ENCODE measurements at regions of chr19 and their contacts with region 1.

Region 1: DNA sequence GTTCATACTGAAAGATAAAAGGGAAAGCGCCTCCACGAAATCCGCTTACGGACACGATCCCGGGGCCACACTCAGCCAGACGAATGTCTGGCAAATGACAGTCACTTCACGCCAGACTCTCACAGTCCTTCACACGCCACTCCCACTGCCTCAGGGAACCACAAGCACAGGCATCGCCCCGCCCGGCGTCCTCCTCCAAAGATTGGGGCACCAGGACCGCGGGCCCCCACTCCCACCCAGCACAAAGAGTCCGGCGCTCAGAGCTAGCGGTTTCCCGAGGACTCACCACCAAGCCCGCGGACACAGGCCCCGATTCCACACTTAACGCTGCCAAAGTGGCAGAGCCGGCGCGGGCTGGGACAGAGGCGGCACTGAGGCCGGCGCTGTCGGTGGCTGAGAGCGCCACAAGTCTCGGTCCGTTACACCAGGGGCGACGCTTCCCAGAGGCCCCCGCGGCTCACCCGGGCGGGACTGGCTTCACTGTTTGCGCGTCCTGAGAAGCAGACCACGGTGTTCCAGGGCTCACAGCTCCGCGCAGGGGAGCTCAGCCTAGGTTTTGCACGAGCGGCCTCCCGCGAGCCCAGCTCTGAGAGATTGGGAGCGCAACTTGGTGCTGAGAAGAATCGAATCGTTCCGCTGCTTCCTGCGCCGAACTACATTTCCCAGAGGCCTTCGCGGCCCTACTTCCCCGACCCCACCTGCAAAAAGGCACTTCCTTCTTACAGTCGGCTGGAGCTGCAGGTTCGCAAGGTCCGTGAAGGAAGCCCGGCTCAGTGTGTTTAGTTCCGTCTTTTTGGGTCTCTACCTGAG is at the start of gene ZNF569:
- DNase-seq: peak; percentile 79 to 96 (median 89)
- ATAC-seq: peak; percentile 65
- H3K4me3 ChIP-seq: peak within 1 kb of the TSS; percentile 88 to 95
- H3K4me3 Mint-ChIP-seq: peak within 1 kb of the TSS; percentile 93
- H3K27ac ChIP-seq: peak within 1 kb of the TSS; percentile 71 to 90
- H3K27ac Mint-ChIP-seq: peak within 1 kb of the TSS; percentile 94
- H3K4me1 ChIP-seq: peaks cover 17% of the 10 kb centered on the region
- H3K4me1 Mint-ChIP-seq: peaks cover 41% of the 10 kb centered on the region
- H3K27me3 ChIP-seq: no peaks in the 10 kb centered on the region
- H3K27me3 Mint-ChIP-seq: no peaks in the 10 kb centered on the region
- CTCF ChIP-seq: no peak
- total RNA-seq, gene ZNF569: 11.2 to 11.8 TPM

Region 2: DNA sequence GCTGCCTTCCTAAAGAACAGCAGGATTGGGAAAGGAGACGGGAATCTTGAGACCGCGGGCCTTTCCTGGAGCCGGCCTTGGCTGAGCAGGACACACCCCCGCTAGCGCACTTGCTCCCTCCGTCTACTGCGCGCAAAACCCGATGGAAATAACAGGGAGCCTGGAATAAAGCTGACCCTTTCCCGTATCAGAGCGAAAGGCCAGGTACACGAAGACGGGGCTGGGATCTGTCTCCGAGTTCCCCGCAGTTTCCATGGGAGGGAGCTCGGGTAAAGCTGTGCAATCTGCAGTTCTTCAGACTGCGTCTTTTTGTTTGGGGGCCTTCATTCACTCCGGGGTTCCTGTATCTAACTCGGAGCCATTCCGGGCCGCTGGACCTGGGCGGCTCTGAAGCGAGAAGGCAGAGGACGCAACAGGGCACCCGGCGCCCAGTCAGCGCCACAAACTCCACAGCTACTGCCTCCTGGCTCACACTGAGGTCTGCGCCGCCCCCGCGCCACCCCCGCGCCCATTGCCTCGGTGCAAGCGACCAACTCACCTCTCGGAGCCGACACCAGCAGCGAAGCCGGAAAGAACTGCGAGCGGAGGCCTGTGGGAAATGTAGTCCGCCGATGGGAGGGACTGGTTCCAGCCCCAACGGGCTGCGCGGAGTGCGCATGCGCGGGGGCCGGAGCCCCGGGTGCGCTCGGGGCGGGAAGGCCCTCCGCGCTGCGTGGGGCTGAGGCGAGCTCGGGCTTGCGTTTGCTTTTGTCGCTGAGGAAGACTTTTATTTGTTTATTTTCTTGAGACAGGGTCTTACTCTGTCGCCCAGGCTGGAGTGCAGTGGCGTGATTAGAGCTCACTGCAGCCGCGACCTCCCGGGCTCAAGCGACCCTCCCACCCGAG is 1088.1 kb before region 1 on chr19 and contains the start of gene ZFP14:
- CTCF ChIA-PET with region 1: no interaction called
- POLR2A ChIA-PET with region 1: no interaction called
- intact Hi-C with region 1: loop called in 1 of 2 experiments (anchors 2 kb)
- DNase-seq: peak; percentile 88 to 97 (median 95)
- ATAC-seq: peak; percentile 97
- H3K4me3 ChIP-seq: peak within 1 kb of the TSS; percentile 68 to 82
- H3K4me3 Mint-ChIP-seq: peak within 1 kb of the TSS; percentile 95
- H3K27ac ChIP-seq: peak within 1 kb of the TSS; percentile 81 to 84
- H3K27ac Mint-ChIP-seq: peak within 1 kb of the TSS; percentile 98
- H3K4me1 ChIP-seq: peaks cover 10% of the 10 kb centered on the region
- H3K4me1 Mint-ChIP-seq: peaks cover 29% of the 10 kb centered on the region
- H3K27me3 ChIP-seq: no peaks in the 10 kb centered on the region
- H3K27me3 Mint-ChIP-seq: no peaks in the 10 kb centered on the region
- CTCF ChIP-seq: peak; percentile 58
- total RNA-seq, gene ZFP14: 5.0 to 5.7 TPM

Region 3: GRCh38 chr19:36665832-36666231 is 801.2 kb before region 1 on chr19:
- CTCF ChIA-PET with region 1: no interaction called
- POLR2A ChIA-PET with region 1: no interaction called
- intact Hi-C with region 1: loop called in 1 of 2 experiments (anchors 1 kb)
- DNase-seq: peak in 1 of 9 experiments; percentile 8
- ATAC-seq: no peak
- H3K4me3 ChIP-seq: peak overlapping the region; percentile 62 to 63
- H3K4me3 Mint-ChIP-seq: peak overlapping the region; percentile 98
- H3K27ac ChIP-seq: peak overlapping the region; percentile 59 to 72
- H3K27ac Mint-ChIP-seq: peak overlapping the region; percentile 73
- H3K4me1 ChIP-seq: peaks cover 8% of the 10 kb centered on the region
- H3K4me1 Mint-ChIP-seq: peaks cover 35% of the 10 kb centered on the region
- H3K27me3 ChIP-seq: no peaks in the 10 kb centered on the region
- H3K27me3 Mint-ChIP-seq: no peaks in the 10 kb centered on the region
- CTCF ChIP-seq: no peak

Region 4: DNA sequence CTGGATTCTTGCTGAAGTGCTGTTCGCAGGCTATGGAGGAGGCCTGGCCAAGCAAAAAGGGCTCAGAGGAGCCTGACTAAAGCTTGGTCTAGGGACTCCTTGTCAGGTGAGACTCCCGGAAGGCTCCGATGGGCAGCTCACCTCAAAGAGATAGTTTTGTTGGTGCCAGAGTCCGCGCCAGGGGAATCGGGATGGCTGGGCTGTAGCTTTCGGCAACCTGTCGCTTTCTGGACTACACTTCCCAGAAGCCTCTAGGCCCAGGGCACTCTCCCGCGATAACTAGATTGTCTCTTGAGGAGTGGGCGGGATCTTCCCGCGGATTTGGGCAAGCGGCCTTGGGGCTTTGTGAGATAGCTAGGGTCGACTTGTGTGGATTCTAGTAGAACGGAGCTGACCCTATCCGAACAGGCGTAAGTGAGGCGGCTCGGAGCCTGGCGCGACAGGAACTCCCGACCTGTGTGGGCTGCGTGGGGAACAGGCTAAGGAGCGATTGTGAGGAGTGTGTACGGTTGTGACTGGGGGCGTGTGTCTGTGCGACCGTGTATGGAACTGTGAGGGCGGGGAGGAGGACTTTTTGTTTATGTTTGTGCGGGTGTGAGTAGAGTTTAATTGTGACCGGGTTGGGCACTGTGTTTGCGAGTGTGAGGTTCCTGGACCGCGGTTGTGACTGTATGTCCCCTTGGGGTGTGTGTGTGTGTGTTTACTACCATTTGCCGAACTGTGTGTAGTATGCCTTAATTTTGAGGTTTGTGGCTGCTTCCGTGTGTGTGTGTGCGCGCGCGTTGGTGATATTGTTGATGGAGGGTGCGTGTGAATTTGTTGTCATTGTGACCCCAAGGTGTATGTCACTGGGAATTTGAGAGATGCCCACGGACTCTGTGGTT is 616.2 kb before region 1 on chr19 and contains the start of gene ZNF345:
- CTCF ChIA-PET with region 1: no interaction called
- POLR2A ChIA-PET with region 1: no interaction called
- intact Hi-C with region 1: loop called in 1 of 2 experiments (anchors 2 kb)
- DNase-seq: peak; percentile 66 to 94 (median 85)
- ATAC-seq: peak; percentile 81
- H3K4me3 ChIP-seq: peak within 1 kb of the TSS; percentile 83 to 92
- H3K4me3 Mint-ChIP-seq: no peak within 1 kb of the TSS
- H3K27ac ChIP-seq: peak within 1 kb of the TSS; percentile 74 to 94
- H3K27ac Mint-ChIP-seq: no peak within 1 kb of the TSS
- H3K4me1 ChIP-seq: peaks cover 14% of the 10 kb centered on the region
- H3K4me1 Mint-ChIP-seq: peaks cover 20% of the 10 kb centered on the region
- H3K27me3 ChIP-seq: peaks cover 0 to 2% of the 10 kb centered on the region in 2 experiments
- H3K27me3 Mint-ChIP-seq: no peaks in the 10 kb centered on the region
- CTCF ChIP-seq: no peak
- total RNA-seq, gene ZNF345: 7.8 to 8.0 TPM

Region 5: DNA sequence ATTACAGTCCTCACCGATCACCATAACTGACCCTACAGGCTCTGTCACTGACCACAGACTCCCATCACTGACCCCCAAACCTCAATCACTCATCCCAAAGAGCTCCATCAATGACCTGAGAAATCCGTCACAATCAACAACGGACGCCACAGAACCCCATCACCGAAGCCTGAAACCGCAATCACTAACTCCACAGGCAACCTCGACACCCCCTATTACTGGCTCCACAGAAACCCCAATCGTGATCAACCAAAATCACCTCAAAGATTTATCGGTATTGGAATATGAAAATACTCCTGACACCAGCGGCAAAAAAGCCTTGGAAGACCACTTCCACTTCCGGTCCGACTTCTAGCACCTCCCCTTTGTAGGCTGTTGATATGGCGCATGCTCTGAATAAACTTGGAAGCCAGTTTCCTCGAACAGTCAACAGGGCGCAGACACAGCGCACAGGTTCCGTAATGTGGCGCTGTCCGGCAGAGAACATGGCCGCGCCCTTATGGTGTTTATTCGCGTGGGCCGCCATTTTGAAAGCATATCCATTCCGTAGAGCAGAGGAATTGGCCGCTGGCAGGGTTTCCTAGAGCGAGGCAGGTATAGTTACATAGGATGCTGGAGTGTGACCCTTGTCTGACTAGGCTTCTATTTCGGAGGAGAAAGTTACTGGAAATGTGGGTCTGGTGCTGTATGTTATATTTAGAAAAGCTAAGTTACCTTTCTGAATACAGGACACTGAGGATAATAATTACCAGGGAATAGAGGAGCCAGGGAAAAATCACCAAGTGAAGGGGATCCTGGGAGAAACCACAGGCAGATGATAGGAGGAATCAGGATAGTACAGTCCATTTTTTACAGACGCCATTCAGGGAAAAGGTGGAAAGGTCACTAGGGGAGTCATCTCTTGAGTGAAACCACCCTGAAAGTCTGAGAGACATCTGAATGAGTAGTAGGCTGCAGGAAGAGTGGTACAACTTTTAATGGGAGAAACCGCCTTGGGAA is 294.3 kb before region 1 on chr19 and contains the start of gene ZNF585A:
- CTCF ChIA-PET with region 1: no interaction called
- POLR2A ChIA-PET with region 1: no interaction called
- intact Hi-C with region 1: loop called (anchors 1 kb)
- DNase-seq: peak; percentile 83 to 98 (median 90)
- ATAC-seq: peak; percentile 99
- H3K4me3 ChIP-seq: peak within 1 kb of the TSS; percentile 85 to 91
- H3K4me3 Mint-ChIP-seq: no peak within 1 kb of the TSS
- H3K27ac ChIP-seq: peak within 1 kb of the TSS; percentile 74 to 89
- H3K27ac Mint-ChIP-seq: no peak within 1 kb of the TSS
- H3K4me1 ChIP-seq: no peaks in the 10 kb centered on the region
- H3K4me1 Mint-ChIP-seq: peaks cover 6% of the 10 kb centered on the region
- H3K27me3 ChIP-seq: no peaks in the 10 kb centered on the region
- H3K27me3 Mint-ChIP-seq: no peaks in the 10 kb centered on the region
- CTCF ChIP-seq: no peak
- total RNA-seq, gene ZNF585A: 5.3 TPM

Region 6: GRCh38 chr19:37389234-37389633 is 77.8 kb before region 1 on chr19:
- CTCF ChIA-PET with region 1: no interaction called
- POLR2A ChIA-PET with region 1: no interaction called
- intact Hi-C with region 1: no loop called
- DNase-seq: no peak
- ATAC-seq: no peak
- H3K4me3 ChIP-seq: no peak overlapping the region
- H3K4me3 Mint-ChIP-seq: no peak overlapping the region
- H3K27ac ChIP-seq: no peak overlapping the region
- H3K27ac Mint-ChIP-seq: no peak overlapping the region
- H3K4me1 ChIP-seq: no peaks in the 10 kb centered on the region
- H3K4me1 Mint-ChIP-seq: no peaks in the 10 kb centered on the region
- H3K27me3 ChIP-seq: no peaks in the 10 kb centered on the region
- H3K27me3 Mint-ChIP-seq: no peaks in the 10 kb centered on the region
- CTCF ChIP-seq: no peak

Region 7: DNA sequence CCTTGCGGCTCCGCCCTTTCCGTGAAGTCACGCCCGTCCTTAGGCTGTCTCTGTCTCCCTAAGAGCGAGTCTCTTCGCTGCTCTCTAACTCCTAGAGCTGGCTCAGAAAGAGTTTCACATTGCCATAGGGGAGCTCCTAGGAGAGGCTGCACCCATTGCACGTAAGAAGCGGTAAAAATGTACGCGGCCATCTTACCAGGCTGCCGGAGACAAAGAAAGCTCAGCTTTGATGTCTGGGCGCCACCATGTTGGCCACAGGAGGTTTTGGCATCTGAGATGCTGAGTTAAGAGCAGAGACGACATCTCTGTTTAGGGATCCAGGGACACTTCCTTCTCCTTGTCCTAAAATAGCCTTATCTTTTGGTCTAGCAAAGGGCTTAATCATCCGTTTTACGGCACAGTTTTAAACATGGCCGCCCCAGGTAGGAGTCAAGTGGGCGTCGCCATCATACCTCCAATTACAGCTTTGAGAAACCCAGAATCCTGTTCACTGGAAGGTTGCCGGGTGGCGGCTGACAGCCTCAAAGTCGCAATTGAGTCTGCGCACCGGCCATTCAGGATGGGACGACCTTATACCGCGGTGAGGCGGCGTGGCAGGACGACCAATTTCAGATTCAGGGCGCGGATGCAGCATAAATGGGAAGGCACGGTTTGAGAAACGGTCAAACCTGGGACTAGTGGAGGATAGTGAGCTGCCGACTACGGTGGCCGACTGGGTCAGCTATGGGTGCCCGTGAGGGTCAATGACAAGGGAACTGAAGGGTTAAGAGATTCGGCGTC is 39.6 kb after region 1 on chr19 and contains the start of gene ZNF793:
- CTCF ChIA-PET with region 1: no interaction called
- POLR2A ChIA-PET with region 1: interaction called, 22 read pairs
- intact Hi-C with region 1: loop called (anchors 1 kb)
- DNase-seq: peak; percentile 53 to 89 (median 83)
- ATAC-seq: peak; percentile 87
- H3K4me3 ChIP-seq: peak within 1 kb of the TSS; percentile 82 to 86
- H3K4me3 Mint-ChIP-seq: no peak within 1 kb of the TSS
- H3K27ac ChIP-seq: peak within 1 kb of the TSS; percentile 94 to 97
- H3K27ac Mint-ChIP-seq: no peak within 1 kb of the TSS
- H3K4me1 ChIP-seq: peaks cover 16% of the 10 kb centered on the region
- H3K4me1 Mint-ChIP-seq: no peaks in the 10 kb centered on the region
- H3K27me3 ChIP-seq: no peaks in the 10 kb centered on the region
- H3K27me3 Mint-ChIP-seq: no peaks in the 10 kb centered on the region
- CTCF ChIP-seq: no peak
- total RNA-seq, gene ZNF793: 2.4 to 3.3 TPM

Region 8: GRCh38 chr19:37779127-37780005 is 312.4 kb after region 1 on chr19 and contains the start of gene ZNF573:
- CTCF ChIA-PET with region 1: no interaction called
- POLR2A ChIA-PET with region 1: interaction called, 4 read pairs
- intact Hi-C with region 1: loop called (anchors 1 kb)
- DNase-seq: peak; percentile 66 to 99 (median 82)
- ATAC-seq: peak; percentile 84
- H3K4me3 ChIP-seq: peak within 1 kb of the TSS; percentile 67 to 70
- H3K4me3 Mint-ChIP-seq: peak within 1 kb of the TSS; percentile 97
- H3K27ac ChIP-seq: peak within 1 kb of the TSS; percentile 96 to 98
- H3K27ac Mint-ChIP-seq: peak within 1 kb of the TSS; percentile 91
- H3K4me1 ChIP-seq: peaks cover 12% of the 10 kb centered on the region
- H3K4me1 Mint-ChIP-seq: peaks cover 46% of the 10 kb centered on the region
- H3K27me3 ChIP-seq: no peaks in the 10 kb centered on the region
- H3K27me3 Mint-ChIP-seq: no peaks in the 10 kb centered on the region
- CTCF ChIP-seq: no peak
- total RNA-seq, gene ZNF573: 3.9 to 5.8 TPM